Cardiac septum (tissue), 1 donor: ENCODE measurements at regions of chr2 and their contacts with region 1.

Region 1: DNA sequence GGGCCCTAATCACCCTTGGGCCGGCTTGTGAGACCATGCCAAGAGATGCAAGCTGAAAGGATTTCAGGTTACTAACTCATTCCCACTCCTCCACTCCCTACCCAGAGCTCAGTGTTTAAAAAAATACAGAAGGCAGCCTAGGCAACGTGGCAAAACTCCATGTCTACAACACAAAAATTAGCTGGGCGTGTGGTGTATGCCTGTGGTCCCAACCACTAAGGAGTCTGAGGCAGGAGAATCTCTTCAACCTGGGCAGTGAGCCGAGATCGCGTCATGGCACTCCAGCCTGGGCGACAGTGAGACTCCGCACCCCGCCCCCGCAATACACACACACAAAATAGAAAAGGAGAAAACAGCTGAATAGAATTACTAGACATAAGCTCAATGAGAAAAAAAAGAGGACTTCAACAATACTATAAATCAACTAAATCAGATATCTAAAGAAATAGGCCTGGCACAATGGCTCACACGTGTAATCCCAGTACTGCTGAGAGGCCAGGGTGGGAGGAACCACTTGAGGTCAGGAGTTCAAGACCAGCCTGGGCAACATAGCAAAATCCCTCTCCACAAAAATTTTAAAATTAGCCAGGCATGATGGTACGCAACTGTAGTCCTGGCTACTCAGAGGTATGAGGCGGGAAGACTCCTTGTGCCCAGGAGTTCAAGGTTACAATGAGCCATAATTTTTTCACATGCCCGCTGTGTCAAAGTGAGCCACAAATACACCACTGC is 10.1 kb downstream of the IWS1 start:
- DNase-seq: peak; percentile 88

Region 2: DNA sequence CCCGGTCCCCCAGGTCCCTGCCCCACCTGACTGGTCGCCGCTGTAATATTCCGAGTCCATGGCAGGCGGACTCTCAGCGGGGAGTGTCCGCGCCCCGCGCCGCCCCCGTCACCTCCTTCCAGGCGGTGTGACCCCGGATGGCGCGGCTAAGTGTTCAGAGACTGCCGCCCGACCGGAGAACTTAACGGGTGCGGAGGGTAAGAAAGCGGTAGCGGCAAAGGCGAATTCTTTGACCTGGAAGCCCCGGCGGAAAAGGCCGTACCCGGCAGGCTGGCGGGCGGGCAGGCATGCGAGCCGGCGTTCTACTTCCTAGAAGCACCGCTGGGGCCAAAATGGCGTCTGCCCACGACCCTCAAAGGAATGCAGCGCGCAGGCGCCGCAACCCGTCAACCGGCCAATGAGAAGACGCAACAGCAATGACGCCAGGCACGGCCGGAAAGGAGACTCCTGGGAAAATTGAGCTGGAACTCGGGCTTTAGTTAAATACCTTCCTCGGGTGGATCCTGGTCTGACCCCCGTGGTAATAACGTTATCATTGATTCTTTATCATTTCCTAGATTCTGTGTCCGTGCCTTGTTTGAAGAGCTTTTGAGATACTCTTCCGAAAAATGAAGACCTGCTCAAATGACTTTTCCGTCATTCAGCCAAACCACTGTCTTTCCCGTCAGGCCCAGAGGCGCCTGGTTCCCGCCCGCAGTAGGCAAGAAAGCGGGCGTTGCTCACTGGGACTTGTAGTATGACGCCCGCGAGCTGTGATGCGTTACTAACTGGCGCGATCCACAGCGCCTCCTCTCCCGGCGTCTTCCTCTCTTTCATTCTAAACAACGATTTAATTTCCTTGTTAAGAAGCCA is 10.2 kb after region 1 on chr2 and contains the start of gene IWS1:
- intact Hi-C with region 1: loop called (anchors 1 kb)
- DNase-seq: peak; percentile 97
- total RNA-seq, gene IWS1: 40.7 TPM

Region 3: GRCh38 chr2:127576433-127577207 is 60.4 kb after region 1 on chr2:
- intact Hi-C with region 1: loop called (anchors 5 kb)
- DNase-seq: peak; percentile 89

Region 4: GRCh38 chr2:127649684-127650040 is 133.5 kb after region 1 on chr2:
- intact Hi-C with region 1: loop called (anchors 5 kb)
- DNase-seq: peak; percentile 91